ENCODE measurements at regions of chrX and their contacts with region 1.

Region 1: DNA sequence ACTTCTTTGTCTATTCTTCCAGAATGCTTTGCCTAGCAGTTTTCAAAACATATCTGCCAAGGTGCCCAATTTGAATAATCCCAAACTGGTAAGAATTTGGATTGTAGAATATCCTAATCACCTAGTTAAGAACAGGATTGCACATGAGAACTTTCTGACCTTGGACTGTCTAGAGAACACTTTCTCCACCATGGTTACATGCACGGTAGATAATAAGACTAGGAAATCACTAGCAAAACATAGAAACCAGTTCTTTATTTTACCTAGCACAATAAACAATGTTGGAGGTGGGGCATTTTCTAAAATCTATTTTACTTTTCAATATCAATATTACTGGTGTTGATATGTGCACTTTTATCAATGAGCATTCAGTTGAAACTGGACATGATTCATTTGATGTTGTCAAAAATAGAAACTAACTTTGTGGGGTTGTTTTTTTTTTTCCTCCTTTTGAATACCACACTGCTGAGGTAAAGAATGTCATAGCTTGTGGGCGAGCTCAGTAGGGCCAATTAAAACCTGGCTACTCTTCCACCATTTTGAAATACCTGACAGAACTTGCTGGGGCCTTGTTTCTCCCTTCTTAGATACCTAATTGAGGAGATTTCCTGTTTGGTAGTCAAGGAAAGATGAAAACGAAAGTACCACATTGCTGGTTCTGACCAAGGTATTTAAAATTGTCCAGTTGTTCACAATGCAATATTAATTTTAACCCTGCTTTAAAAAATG is 10.4 kb downstream of the MID1IP1 start:
- DNase-seq: peak; percentile 25
- H3K4me3 Mint-ChIP-seq: peak overlapping the region; percentile 52
- H3K27ac Mint-ChIP-seq: peak overlapping the region; percentile 88
- H3K4me1 Mint-ChIP-seq: peaks cover 42% of the 10 kb centered on the region
- H3K27me3 Mint-ChIP-seq: no peaks in the 10 kb centered on the region

Region 2: GRCh38 chrX:38859602-38860001 is 47.9 kb after region 1 on chrX:
- CTCF ChIA-PET with region 1: no interaction called
- POLR2A ChIA-PET with region 1: interaction called, 3 read pairs
- intact Hi-C with region 1: loop called (anchors 2 kb)
- DNase-seq: no peak
- H3K4me3 Mint-ChIP-seq: no peak overlapping the region
- H3K27ac Mint-ChIP-seq: no peak overlapping the region
- H3K4me1 Mint-ChIP-seq: peaks cover 4% of the 10 kb centered on the region
- H3K27me3 Mint-ChIP-seq: no peaks in the 10 kb centered on the region

Region 3: DNA sequence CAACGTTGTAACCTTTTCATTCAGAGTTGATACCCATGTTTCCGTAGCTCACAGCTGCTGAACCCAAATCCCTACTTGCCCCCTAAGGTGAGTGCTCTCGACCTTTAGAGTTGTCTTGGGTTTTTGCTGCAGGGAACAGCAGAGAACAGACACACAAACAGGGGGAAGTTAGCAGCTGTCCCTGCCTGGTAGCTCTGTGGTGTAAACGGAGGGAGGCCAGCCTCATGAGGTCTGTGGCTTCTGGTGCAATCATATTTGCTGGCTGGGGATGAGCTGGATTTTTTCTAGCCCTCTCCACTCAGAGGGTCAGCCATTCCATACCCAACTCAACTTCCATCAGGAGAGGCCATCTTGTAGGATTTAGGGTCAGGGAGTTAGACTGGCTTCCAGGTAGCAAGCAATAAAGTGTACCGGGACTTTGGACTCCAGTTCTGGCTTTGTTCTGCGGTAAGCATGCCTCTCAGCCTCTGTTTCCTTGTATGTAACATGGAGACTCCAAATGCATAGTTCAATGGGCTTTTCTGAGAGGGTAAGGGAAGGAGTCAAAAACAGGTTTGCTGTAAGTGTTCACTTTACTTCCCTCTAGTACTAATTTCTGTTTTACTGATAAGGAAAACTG is 208.5 kb after region 1 on chrX:
- CTCF ChIA-PET with region 1: no interaction called
- POLR2A ChIA-PET with region 1: no interaction called
- intact Hi-C with region 1: no loop called
- DNase-seq: no peak
- H3K4me3 Mint-ChIP-seq: no peak overlapping the region
- H3K27ac Mint-ChIP-seq: no peak overlapping the region
- H3K4me1 Mint-ChIP-seq: no peaks in the 10 kb centered on the region
- H3K27me3 Mint-ChIP-seq: no peaks in the 10 kb centered on the region